ENCODE measurements at regions of chr4 and their contacts with region 1.

Region 1: DNA sequence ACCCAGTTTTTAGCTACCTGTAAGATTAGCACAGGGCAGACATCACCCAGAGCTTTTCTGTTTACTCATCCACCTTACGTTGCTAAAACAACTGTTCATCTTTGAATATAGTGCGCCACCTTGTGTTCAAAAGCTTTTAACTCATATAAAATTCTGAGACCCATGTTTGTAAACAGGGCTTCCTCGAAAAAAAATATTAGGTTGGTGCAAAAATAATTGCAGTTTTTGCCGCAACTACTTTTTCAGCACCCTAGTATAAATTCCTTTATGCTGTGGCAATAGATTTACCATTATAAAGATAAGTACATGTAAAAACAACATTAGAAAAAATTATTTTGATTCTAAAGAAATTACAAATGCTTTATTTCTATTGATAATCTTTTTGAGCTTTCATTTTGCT is 147.9 kb downstream of the LRBA start:
- DNase-seq: no peak
- ATAC-seq: peak; percentile 65 to 81

Region 2: GRCh38 chr4:149999485-150000074 is 867.6 kb before region 1 on chr4:
- intact Hi-C with region 1: loop called in 1 of 2 experiments (anchors 5 kb)
- DNase-seq: peak; percentile 25
- ATAC-seq: peak; percentile 55 to 69

Region 3: DNA sequence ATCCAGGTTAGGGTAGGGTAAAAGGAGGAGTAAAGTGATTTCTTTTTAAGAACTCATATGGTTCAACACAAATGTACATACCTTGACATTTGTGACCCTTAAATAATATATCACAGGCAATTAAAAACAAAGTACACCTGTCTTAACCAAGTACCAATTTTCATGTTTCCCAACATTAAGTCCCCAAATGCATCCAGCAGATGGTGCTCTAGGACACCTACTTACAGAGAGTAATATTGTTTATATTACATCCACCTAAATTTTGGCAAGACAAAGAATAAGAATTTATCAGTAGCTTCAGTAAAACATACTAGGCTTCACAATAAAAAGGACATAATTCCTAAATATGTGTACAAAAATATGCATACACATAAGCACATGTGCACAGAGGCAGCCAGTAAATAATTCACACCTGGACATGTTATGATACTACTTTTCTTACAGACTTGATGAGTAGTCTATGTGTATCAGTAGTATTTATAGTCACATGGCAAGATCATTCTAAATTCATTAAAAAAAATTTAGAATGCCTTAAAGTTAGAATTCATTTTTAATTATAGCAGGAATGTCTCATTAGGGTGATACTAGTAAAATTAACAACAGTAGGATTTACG is 569.2 kb before region 1 on chr4:
- intact Hi-C with region 1: loop called (anchors 2 to 10 kb)
- DNase-seq: peak; percentile 37
- ATAC-seq: no peak

Region 4: GRCh38 chr4:150722908-150723362 is 144.2 kb before region 1 on chr4:
- intact Hi-C with region 1: loop called (anchors 5 to 10 kb)
- DNase-seq: peak; percentile 90
- ATAC-seq: peak; percentile 96 to 99

Region 5: DNA sequence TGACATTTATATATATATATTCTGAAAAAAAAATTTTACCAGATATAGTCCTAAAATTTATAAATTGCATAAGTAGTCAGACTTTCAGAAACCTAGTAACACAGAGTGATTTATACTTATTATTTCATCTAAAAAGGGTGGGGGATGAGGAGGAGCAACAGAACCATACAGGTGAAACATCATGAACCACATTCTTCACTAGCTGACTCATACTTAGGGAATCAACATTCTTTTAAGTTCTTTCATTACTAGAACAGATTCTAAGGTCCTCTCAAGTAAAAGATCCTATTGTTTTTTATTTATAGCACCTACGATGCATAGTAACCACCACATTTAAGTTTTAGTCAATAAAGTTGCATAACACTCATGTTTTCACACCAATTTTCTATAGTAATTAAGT is 18.1 kb before region 1 on chr4:
- intact Hi-C with region 1: no loop called
- DNase-seq: no peak
- ATAC-seq: no peak

Region 6: DNA sequence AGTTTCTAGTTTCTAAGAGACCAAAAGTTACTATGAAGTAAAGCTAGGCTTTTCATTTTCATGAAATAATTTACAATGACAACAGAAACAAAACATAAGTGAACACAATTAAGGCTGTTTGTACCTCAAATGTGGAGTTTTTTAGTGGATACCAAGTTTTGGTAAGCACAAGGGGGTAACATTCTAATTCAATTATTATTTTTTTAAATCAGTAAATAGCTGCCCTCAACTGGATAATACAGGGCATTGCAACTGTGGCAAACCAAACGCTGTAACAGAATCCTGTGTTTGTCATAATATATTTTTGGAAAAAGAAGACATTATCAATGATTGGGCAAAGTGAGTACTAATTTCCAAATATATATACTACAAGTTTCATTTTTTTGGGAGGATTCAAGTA is 1518.4 kb after region 1 on chr4:
- intact Hi-C with region 1: no loop called
- DNase-seq: no peak
- ATAC-seq: no peak